ENCODE measurements at regions of chr12 and their contacts with region 1.

Region 1: DNA sequence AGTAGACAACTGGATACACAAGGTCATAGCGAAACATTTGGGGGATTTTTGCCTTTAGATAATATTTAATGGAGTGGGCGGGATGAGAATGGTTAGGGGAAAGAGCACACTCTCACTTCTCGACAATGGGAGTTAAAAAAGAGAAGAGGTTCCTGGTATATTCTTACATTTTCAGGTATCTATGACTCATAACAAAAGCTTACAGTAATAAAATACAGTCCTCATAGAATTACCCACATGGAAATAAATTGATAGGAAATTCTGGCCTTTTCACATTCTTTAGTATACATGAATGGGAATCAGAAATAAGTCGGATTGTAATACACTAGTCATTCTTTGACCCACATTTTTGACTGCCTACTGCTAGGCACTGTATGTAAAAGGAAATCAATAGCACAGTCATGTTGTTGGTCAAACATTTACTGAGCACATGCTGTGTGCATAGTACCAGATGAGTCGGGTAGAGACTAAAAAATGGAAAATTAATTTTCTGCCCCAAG is 8.2 kb upstream of the CRADD start:
- DNase-seq: no peak
- H3K4me3 Mint-ChIP-seq: no peak overlapping the region
- H3K27ac Mint-ChIP-seq: peak overlapping the region; percentile 82
- H3K4me1 Mint-ChIP-seq: peaks cover 28% of the 10 kb centered on the region
- H3K27me3 Mint-ChIP-seq: peaks cover 5% of the 10 kb centered on the region

Region 2: GRCh38 chr12:93624595-93625294 is 44.2 kb before region 1 on chr12:
- CTCF ChIA-PET with region 1: no interaction called
- intact Hi-C with region 1: loop called (anchors 5 kb)
- DNase-seq: no peak
- H3K4me3 Mint-ChIP-seq: no peak overlapping the region
- H3K27ac Mint-ChIP-seq: no peak overlapping the region
- H3K4me1 Mint-ChIP-seq: peaks cover 7% of the 10 kb centered on the region
- H3K27me3 Mint-ChIP-seq: no peaks in the 10 kb centered on the region

Measured in activated naive CD4-positive, alpha-beta T cell treated with anti-CD3 and anti-CD28 coated beads for 36 hours (primary cell).